ENCODE measurements at regions of chr20 and their contacts with region 1.

Region 1: GRCh38 chr20:555933-556526 is 12.4 kb upstream of the CSNK2A1 start:
- DNase-seq: peak; percentile 31
- H3K4me3 ChIP-seq: no peak overlapping the region
- H3K27ac ChIP-seq: no peak overlapping the region
- H3K4me1 ChIP-seq: no peaks in the 10 kb centered on the region
- H3K27me3 ChIP-seq: peaks cover 5% of the 10 kb centered on the region

Region 2: GRCh38 chr20:621125-621756 is 65.2 kb after region 1 on chr20:
- in situ Hi-C with region 1: no loop called
- DNase-seq: peak; percentile 81
- H3K4me3 ChIP-seq: no peak overlapping the region
- H3K27ac ChIP-seq: 0 out of 2 replicates have a peak overlapping the region, but pooled peaks have one; percentile 25
- H3K4me1 ChIP-seq: peaks cover 7% of the 10 kb centered on the region; the same call in 1 of the 2 replicates
- H3K27me3 ChIP-seq: peaks cover 39% of the 10 kb centered on the region

Region 3: GRCh38 chr20:745683-746301 is 189.8 kb after region 1 on chr20:
- in situ Hi-C with region 1: loop called (anchors 10 kb)
- DNase-seq: peak; percentile 36
- H3K4me3 ChIP-seq: no peak overlapping the region
- H3K27ac ChIP-seq: no peak overlapping the region
- H3K4me1 ChIP-seq: no peaks in the 10 kb centered on the region
- H3K27me3 ChIP-seq: 0 out of 2 replicates have a peak, but pooled peaks cover 5% of the 10 kb centered on the region

Region 4: GRCh38 chr20:1005452-1006027 is 449.5 kb after region 1 on chr20:
- in situ Hi-C with region 1: no loop called
- DNase-seq: peak; percentile 34
- H3K4me3 ChIP-seq: no peak overlapping the region
- H3K27ac ChIP-seq: no peak overlapping the region
- H3K4me1 ChIP-seq: no peaks in the 10 kb centered on the region
- H3K27me3 ChIP-seq: 0 out of 2 replicates have a peak, but pooled peaks cover 7% of the 10 kb centered on the region

Region 5: GRCh38 chr20:1163105-1163504 is 607.1 kb after region 1 on chr20:
- in situ Hi-C with region 1: no loop called
- DNase-seq: no peak
- H3K4me3 ChIP-seq: no peak overlapping the region
- H3K27ac ChIP-seq: no peak overlapping the region
- H3K4me1 ChIP-seq: no peaks in the 10 kb centered on the region
- H3K27me3 ChIP-seq: no peaks in the 10 kb centered on the region